CD4-positive, alpha-beta T cell (primary cell): ENCODE measurements at regions of chr17 and their contacts with region 1.

Region 1: GRCh38 chr17:2303204-2304188 is at the starts of genes SMG6 and SRR:
- DNase-seq: peak; percentile 91 to 98 (median 95)
- ATAC-seq: peak; percentile 91
- H3K4me3 ChIP-seq: peak within 1 kb of the TSS; percentile 94
- H3K4me3 Mint-ChIP-seq: peak within 1 kb of the TSS; percentile 98
- H3K27ac ChIP-seq: peak within 1 kb of the TSS; percentile 52 to 84
- H3K27ac Mint-ChIP-seq: peak within 1 kb of the TSS; percentile 90
- H3K4me1 ChIP-seq: peaks cover 30% of the 10 kb centered on the region
- H3K4me1 Mint-ChIP-seq: peaks cover 55% of the 10 kb centered on the region
- H3K27me3 ChIP-seq: no peaks in the 10 kb centered on the region
- H3K27me3 Mint-ChIP-seq: no peaks in the 10 kb centered on the region
- CTCF ChIP-seq: no peak
- total RNA-seq, gene SMG6: 39.3 to 39.7 TPM
- total RNA-seq, gene SRR: 2.5 to 2.8 TPM

Region 2: DNA sequence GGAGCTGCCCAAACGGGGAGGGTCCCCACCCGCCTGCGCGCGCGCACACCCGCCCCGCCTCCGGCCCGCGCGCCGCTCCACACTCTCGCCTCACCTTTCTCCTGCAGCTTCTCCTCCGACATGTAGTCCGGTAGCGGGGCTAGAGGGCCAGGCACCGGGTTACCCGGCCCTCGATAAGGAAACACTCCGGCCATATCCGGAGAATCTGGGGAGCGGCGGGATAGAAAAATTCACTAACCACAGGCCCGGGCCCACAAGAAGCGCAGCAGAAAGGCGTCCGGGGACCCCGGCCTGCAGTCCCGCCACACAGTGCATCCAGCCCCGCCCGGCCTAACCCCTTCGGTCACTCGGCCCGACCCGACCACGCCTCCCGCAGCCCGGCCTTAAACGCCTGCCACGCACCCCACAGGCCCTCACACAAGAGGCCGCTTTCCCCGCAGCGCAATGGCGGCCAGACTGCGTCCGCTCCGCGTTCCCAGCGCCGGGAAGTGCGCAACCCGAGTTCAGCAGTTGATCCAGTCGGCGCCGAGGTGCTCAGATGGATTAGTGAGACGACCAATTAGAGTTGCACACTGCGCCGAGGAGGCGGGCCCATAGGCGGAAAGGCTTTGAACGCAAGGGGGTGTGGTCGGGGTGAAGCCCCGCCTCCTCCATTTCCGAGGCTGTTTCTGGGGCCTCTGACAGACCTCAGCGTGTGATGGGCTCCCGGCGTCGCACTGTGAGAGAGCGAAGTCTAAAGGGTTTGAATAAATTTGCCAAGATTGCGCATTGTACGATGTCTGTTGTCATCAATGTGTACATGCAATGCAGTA is 618.9 kb before region 1 on chr17 and contains the start of gene PRPF8:
- CTCF ChIA-PET with region 1: no interaction called
- POLR2A ChIA-PET with region 1: interaction called, 10 read pairs
- intact Hi-C with region 1: no loop called
- DNase-seq: peak; percentile 97 to 99 (median 98)
- ATAC-seq: peak; percentile 96
- H3K4me3 ChIP-seq: peak within 1 kb of the TSS; percentile 93
- H3K4me3 Mint-ChIP-seq: peak within 1 kb of the TSS; percentile 99
- H3K27ac ChIP-seq: peak within 1 kb of the TSS; percentile 86 to 95
- H3K27ac Mint-ChIP-seq: peak within 1 kb of the TSS; percentile 96
- H3K4me1 ChIP-seq: peaks cover 33% of the 10 kb centered on the region
- H3K4me1 Mint-ChIP-seq: peaks cover 49% of the 10 kb centered on the region
- H3K27me3 ChIP-seq: no peaks in the 10 kb centered on the region
- H3K27me3 Mint-ChIP-seq: no peaks in the 10 kb centered on the region
- CTCF ChIP-seq: no peak
- total RNA-seq, gene PRPF8: 550 to 572 TPM

Region 3: DNA sequence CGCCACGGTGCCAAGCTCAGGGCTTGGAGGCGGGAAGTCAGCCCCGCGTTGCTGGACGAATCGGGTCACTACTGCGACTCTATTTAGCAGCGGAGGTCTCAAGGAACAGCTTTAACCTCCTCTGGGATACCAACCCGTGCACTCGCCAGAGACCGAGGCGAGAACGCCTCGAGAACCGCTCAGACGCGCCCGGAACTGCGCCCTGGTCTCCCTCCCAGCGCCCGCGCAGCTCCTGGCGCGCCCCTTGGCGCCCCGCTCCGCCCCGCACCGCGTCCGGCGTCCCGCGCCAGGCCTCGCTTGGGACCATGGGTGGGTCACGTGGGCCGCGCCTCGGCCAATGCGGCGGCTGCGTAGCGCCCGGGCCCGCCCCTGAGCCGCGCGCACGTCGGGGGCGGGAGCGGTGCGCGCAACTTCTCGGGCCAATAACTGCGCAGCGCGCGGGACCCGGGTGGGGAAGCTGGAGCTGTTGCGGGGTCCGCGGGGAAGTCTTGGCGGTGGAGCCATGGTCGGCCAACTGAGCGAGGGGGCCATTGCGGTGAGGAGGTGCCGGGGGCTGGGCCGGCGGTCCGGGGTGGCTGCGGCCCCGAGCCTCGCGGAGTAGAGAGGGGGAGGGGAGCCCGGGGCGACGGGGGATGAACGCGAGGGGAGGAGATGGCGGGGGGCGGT is 473.8 kb before region 1 on chr17 and contains the starts of genes RPA1 and SMYD4:
- CTCF ChIA-PET with region 1: no interaction called
- POLR2A ChIA-PET with region 1: interaction called, 3 read pairs
- intact Hi-C with region 1: loop called in 1 of 2 experiments (anchors 5 kb)
- DNase-seq: peak; percentile 71 to 95 (median 84)
- ATAC-seq: peak; percentile 98
- H3K4me3 ChIP-seq: peak within 1 kb of the TSS; percentile 87
- H3K4me3 Mint-ChIP-seq: peak within 1 kb of the TSS; percentile 99
- H3K27ac ChIP-seq: peak within 1 kb of the TSS; percentile 61 to 81
- H3K27ac Mint-ChIP-seq: peak within 1 kb of the TSS; percentile 90
- H3K4me1 ChIP-seq: peaks cover 51% of the 10 kb centered on the region
- H3K4me1 Mint-ChIP-seq: peaks cover 66% of the 10 kb centered on the region
- H3K27me3 ChIP-seq: no peaks in the 10 kb centered on the region
- H3K27me3 Mint-ChIP-seq: no peaks in the 10 kb centered on the region
- CTCF ChIP-seq: no peak
- total RNA-seq, gene RPA1: 38.6 to 38.7 TPM
- total RNA-seq, gene SMYD4: 9.3 to 10.6 TPM

Region 4: GRCh38 chr17:2179615-2180295 is 123.7 kb before region 1 on chr17:
- CTCF ChIA-PET with region 1: no interaction called
- POLR2A ChIA-PET with region 1: no interaction called
- intact Hi-C with region 1: no loop called
- DNase-seq: no peak
- ATAC-seq: no peak
- H3K4me3 ChIP-seq: no peak overlapping the region
- H3K4me3 Mint-ChIP-seq: no peak overlapping the region
- H3K27ac ChIP-seq: no peak overlapping the region
- H3K27ac Mint-ChIP-seq: no peak overlapping the region
- H3K4me1 ChIP-seq: no peaks in the 10 kb centered on the region
- H3K4me1 Mint-ChIP-seq: no peaks in the 10 kb centered on the region
- H3K27me3 ChIP-seq: no peaks in the 10 kb centered on the region
- H3K27me3 Mint-ChIP-seq: no peaks in the 10 kb centered on the region
- CTCF ChIP-seq: no peak

Region 5: GRCh38 chr17:2266045-2266864 is 37.2 kb before region 1 on chr17:
- CTCF ChIA-PET with region 1: interaction called, 5 read pairs
- POLR2A ChIA-PET with region 1: interaction called, 21 read pairs
- intact Hi-C with region 1: no loop called
- DNase-seq: peak; percentile 55 to 96 (median 71)
- ATAC-seq: peak; percentile 80
- H3K4me3 ChIP-seq: peak overlapping the region; percentile 36
- H3K4me3 Mint-ChIP-seq: peak overlapping the region; percentile 67
- H3K27ac ChIP-seq: peak overlapping the region; percentile 83 to 84
- H3K27ac Mint-ChIP-seq: peak overlapping the region; percentile 98
- H3K4me1 ChIP-seq: peaks cover 87% of the 10 kb centered on the region
- H3K4me1 Mint-ChIP-seq: peaks cover 85% of the 10 kb centered on the region
- H3K27me3 ChIP-seq: no peaks in the 10 kb centered on the region
- H3K27me3 Mint-ChIP-seq: no peaks in the 10 kb centered on the region
- CTCF ChIP-seq: no peak

Region 6: DNA sequence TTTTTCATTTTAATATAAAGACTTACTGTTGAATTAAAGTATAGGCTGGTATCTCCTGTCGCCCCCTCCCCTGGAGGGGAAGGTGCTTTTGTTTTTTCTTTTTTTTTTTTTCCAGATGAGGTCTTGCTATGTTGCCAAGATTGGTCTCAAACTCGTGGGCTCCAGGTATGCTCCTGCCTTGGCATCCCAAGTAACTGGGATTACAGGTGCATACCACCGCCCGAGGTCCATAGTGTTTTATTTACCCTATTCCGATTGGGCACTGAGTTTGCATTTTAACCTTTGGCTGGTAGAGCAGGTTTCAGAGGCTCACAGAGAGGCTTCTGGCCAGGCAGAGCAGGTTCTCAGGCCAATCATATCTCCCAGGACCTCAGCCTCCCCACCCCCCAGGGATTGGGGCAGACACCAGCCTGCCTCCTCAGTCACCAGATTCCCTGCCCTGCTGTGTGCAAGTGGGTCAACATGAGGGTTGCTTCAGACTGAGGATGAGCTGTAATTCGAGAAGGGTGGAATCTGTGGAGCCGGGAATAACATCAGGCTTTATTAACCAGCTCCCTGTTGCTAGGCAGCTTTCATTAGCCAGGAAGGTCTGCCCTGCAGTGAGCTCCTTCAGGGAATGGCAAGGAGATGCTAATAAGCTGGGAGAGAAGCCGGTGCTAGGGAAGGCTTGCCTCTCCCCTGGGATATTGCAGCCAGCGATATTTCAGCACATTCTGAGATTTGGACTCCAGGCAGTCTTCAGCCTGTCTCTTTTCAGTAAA is 44.2 kb after region 1 on chr17:
- CTCF ChIA-PET with region 1: interaction called, 4 read pairs
- POLR2A ChIA-PET with region 1: interaction called, 5 read pairs
- intact Hi-C with region 1: loop called in 1 of 2 experiments (anchors 2 kb)
- DNase-seq: no peak
- ATAC-seq: no peak
- H3K4me3 ChIP-seq: no peak overlapping the region
- H3K4me3 Mint-ChIP-seq: no peak overlapping the region
- H3K27ac ChIP-seq: no peak overlapping the region
- H3K27ac Mint-ChIP-seq: no peak overlapping the region
- H3K4me1 ChIP-seq: peaks cover 8% of the 10 kb centered on the region
- H3K4me1 Mint-ChIP-seq: peaks cover 6% of the 10 kb centered on the region
- H3K27me3 ChIP-seq: no peaks in the 10 kb centered on the region
- H3K27me3 Mint-ChIP-seq: no peaks in the 10 kb centered on the region
- CTCF ChIP-seq: no peak

Region 7: DNA sequence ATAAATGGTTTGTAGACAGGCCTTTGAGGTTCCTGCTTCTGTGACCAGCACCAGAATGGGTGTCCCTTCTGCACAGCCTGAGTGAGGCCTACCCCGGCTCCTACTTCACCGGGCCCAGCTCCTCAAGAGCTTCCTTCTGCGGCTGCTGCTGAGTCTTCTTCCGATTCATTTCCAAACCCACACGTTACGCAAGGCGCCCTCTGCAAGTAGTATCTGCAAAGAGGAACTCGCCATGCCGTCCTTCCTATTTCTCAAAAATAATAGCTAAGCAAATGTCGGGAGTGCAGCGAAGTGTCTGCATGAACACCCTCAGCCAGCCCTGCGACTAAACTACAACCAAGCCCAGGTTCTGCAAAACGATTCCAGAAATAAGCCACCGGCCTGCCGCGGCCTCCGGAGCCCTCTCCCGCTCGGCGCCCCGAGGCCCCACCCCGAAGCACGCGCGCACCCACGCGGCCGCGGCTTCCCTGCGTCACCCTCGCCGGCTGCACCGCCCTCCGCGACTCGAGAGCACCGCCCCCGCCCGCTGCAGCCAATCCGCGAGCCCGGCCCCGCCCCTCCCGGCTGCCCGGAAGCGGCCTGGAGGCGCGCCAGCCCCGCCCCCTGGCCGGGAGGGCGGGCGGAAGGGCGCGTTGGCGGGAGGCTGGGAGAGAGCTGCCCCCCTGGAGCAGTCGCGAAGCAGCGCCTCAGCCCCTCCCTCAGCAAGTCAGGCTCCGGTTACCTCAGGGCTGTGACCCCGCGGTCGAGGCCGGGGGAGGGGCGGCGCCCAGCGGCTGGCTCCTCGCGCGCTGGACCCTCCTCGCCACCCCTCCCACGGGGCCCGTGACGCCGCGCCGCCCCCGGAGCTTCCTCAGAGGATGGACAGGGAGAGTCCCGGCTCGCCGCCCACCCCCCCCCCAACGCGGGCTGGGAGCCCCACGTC is 89.0 kb after region 1 on chr17:
- CTCF ChIA-PET with region 1: no interaction called
- POLR2A ChIA-PET with region 1: interaction called, 6 read pairs
- intact Hi-C with region 1: loop called in 1 of 2 experiments (anchors 1 kb)
- DNase-seq: peak; percentile 93 to 99 (median 97)
- ATAC-seq: peak; percentile 64
- H3K4me3 ChIP-seq: peak overlapping the region; percentile 94
- H3K4me3 Mint-ChIP-seq: peak overlapping the region; percentile 99
- H3K27ac ChIP-seq: peak overlapping the region; percentile 98 to 100
- H3K27ac Mint-ChIP-seq: peak overlapping the region; percentile 99
- H3K4me1 ChIP-seq: peaks cover 67% of the 10 kb centered on the region
- H3K4me1 Mint-ChIP-seq: peaks cover 66% of the 10 kb centered on the region
- H3K27me3 ChIP-seq: no peaks in the 10 kb centered on the region
- H3K27me3 Mint-ChIP-seq: no peaks in the 10 kb centered on the region
- CTCF ChIP-seq: no peak

Region 8: DNA sequence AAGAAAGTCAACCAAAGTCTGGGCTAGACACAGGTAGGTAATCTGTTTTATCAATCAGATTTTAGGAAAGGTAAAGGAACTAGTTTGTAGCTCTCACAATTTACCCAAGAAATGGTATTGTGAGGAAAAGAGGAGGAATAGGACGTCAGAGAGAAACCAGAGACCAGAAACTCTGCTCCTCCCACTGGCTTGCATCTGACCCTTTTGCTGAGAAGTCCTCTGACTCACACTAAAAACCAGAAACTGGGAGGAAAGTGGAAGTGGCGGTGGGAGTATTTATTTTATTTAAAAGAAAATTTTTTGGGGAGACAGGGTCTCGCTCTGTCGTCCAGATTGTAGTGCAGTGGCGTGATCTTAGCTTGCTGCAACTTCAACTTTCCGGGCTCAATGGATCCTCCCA is 135.3 kb after region 1 on chr17:
- CTCF ChIA-PET with region 1: no interaction called
- POLR2A ChIA-PET with region 1: no interaction called
- intact Hi-C with region 1: no loop called
- DNase-seq: peak in 2 of 14 experiments; percentile 35 to 46
- ATAC-seq: no peak
- H3K4me3 ChIP-seq: no peak overlapping the region
- H3K4me3 Mint-ChIP-seq: no peak overlapping the region
- H3K27ac ChIP-seq: no peak overlapping the region
- H3K27ac Mint-ChIP-seq: no peak overlapping the region
- H3K4me1 ChIP-seq: no peaks in the 10 kb centered on the region
- H3K4me1 Mint-ChIP-seq: no peaks in the 10 kb centered on the region
- H3K27me3 ChIP-seq: no peaks in the 10 kb centered on the region
- H3K27me3 Mint-ChIP-seq: no peaks in the 10 kb centered on the region
- CTCF ChIP-seq: no peak